Activated CD4-positive, alpha-beta T cell treated with anti-CD3 and anti-CD28 coated beads for 36 hours (primary cell): ENCODE measurements at regions of chr10 and their contacts with region 1.

Region 1: DNA sequence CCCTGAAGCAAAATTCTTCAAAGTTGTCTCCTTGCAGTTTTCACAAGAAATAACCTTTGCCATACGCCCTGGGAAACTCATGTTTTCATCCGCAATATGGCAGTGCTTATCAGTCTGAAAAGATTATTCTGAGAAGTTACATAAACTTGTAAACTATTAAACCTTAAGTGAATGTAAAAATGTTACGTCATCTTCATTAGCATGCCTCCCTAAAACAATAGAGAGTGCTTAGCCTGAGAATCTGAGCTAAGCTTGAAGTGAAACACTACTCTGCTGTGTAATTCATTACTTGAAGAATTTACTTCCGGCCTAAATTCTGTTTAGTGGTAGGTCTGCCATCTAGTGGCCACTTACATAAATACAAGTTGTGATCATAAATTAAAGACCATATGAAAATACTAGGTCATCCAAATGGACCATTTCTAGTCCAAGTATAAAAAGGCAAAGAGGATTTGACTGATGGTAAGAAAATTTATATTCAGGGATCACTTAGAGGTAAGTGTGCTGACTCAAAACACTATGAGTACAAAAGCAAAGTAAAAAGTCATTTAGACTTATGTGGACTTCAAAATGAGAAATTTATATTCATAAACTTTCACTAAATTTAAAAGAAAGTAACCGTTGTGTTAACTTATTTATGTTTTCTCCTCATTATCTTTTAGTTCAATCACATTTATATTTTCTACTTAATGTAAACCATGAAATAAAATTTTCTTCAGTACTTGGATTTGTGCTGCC is 745.1 kb upstream of the LRRTM3 start:
- DNase-seq: peak; percentile 11
- ATAC-seq: peak; percentile 68
- H3K4me3 Mint-ChIP-seq: no peak overlapping the region
- H3K27ac Mint-ChIP-seq: no peak overlapping the region
- H3K4me1 Mint-ChIP-seq: peaks cover 2% of the 10 kb centered on the region
- H3K27me3 Mint-ChIP-seq: no peaks in the 10 kb centered on the region

Region 2: GRCh38 chr10:64733980-64734379 is 1446.8 kb before region 1 on chr10:
- CTCF ChIA-PET with region 1: no interaction called
- POLR2A ChIA-PET with region 1: no interaction called
- intact Hi-C with region 1: loop called in 1 of 2 experiments (anchors 5 kb)
- DNase-seq: peak; percentile 4
- ATAC-seq: no peak
- H3K4me3 Mint-ChIP-seq: no peak overlapping the region
- H3K27ac Mint-ChIP-seq: no peak overlapping the region
- H3K4me1 Mint-ChIP-seq: no peaks in the 10 kb centered on the region
- H3K27me3 Mint-ChIP-seq: no peaks in the 10 kb centered on the region

Region 3: DNA sequence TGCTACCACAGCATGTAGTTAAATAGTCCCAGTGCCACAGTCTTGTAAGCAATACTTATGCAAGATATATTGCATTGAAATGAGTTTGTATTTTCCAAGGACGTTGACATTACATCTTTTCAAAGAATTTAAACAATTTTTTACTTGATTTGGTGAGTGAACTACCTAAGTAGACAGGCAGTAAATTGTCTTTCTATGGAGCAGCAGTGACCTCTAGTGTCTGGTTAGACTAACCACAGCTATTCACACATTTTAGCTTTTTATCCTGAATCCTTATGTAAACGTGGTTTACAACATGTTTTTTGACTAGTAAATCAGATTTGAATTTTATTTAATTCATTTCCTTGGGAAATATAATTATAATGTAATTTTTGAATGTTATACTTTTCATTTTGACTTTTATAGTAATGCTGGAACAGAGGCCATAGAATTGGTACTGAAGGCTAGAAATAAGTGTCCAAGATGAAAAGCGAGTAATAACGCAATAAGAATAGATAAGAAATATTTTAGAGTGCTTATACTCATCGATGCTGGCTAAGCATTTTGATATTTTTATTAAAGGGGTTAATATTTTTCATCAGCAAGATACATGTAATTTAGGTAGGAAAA is 750.7 kb after region 1 on chr10:
- CTCF ChIA-PET with region 1: no interaction called
- POLR2A ChIA-PET with region 1: no interaction called
- intact Hi-C with region 1: loop called in 1 of 2 experiments (anchors 5 kb)
- DNase-seq: peak; percentile 3
- ATAC-seq: no peak
- H3K4me3 Mint-ChIP-seq: no peak overlapping the region
- H3K27ac Mint-ChIP-seq: no peak overlapping the region
- H3K4me1 Mint-ChIP-seq: no peaks in the 10 kb centered on the region
- H3K27me3 Mint-ChIP-seq: peaks cover 32% of the 10 kb centered on the region